ENCODE measurements at regions of chr11 and their contacts with region 1.

Region 1: DNA sequence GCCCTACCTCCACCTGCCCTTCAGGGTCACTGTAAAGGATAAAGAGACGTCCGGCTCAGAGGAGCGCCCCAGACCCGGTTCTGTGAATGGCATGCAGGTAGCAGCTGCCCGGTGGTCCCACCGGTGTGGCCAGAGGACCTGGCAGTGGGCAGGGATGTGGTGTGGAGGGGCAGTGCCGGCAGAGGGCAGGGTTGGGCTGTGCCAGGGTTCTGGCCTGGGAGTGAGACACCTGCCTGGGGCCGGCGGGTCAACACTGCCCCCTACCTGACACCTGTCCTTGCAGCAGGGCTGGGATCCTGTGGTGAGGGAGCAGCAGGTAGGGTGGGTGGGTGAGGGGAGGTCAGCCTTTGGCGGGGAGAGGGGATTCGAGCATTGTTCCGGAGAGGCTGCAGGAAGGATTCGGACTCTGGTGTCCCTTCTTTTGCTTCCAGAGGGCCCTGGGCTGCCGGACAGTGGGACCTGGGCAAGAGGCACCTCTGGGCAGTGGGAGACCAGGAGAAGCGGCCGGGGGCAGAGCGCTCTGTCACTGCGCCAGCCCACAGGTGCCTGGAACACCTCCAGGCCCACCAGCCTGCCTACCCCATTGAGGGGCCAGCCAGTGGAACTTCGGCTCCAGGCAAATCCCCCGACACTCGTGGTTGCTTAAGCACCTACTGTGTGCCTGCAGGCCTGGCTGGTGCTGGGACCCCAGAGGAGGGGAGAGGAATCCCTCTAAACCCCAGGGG is 1.6 kb upstream of the PHLDA2 start:
- DNase-seq: peak; percentile 83 to 97
- H3K4me3 ChIP-seq: peak overlapping the region in 3 of 4 experiments; percentile 26 to 56 (median 38); a peak in 6 of 8 replicates
- H3K27ac ChIP-seq: no peak overlapping the region
- H3K4me1 ChIP-seq: peaks cover 0 to 13% (median 5%) of the 10 kb centered on the region in 4 experiments; a peak in 6 of 7 replicates
- H3K27me3 ChIP-seq: peaks cover 25 to 39% (median 37%) of the 10 kb centered on the region in 4 experiments
- CTCF ChIP-seq: peak in 2 of 3 experiments; percentile 96 to 100; a peak in 3 of 4 replicates
- EP300 ChIP-seq: peak in 1 of 2 experiments; percentile 60; a peak in 1 of 3 replicates
- POLR2A ChIP-seq: no peak
- RAD21 ChIP-seq: peak; percentile 93

Region 2: DNA sequence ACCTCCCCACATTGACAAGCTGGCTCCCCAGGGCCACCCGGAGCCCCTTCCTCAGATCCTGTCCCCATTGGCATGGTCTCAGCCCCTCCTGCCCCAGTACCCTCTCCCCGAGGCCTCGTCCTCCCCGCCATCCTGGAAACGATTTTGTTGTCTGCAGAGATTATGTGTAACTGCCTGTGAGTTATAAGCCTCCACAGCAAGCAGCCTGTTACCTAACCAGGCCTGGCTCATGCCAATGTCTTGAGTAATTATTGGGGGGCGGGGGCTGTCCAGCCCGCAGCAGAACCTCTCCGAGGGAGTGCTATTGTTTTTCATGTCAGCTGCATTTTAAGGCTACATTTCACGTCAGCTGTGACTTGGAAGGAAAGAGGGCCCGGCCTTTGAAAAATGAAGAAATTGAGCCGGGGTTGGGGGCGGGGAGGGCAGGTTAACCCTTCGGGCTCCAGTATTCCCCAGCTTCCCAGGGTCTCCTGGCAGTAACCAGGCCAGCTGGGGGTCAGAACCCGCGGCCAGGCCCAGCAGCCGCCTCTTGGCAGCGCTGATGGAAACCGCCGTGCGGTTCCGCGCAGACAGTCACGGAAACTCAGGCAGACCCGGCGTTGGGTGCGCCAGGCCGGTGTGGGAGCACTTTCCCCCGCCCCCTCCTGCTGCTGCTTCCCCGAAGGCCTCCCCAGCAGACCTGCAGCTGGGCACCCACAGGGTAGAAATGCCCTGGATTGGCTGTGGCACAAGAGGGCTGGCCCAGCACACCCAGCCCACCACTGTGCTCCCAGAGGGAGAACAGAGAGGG is 104.8 kb before region 1 on chr11:
- CTCF ChIA-PET with region 1: no interaction called
- POLR2A ChIA-PET with region 1: no interaction called
- DNase-seq: peak in 1 of 2 experiments; percentile 31
- H3K4me3 ChIP-seq: no peak overlapping the region
- H3K27ac ChIP-seq: no peak overlapping the region
- H3K4me1 ChIP-seq: peaks cover 2 to 18% (median 8%) of the 10 kb centered on the region in 4 experiments
- H3K27me3 ChIP-seq: peaks cover 0 to 31% (median 18%) of the 10 kb centered on the region in 4 experiments; a peak in 6 of 7 replicates
- CTCF ChIP-seq: no peak
- EP300 ChIP-seq: no peak
- POLR2A ChIP-seq: no peak
- RAD21 ChIP-seq: no peak

Region 3: GRCh38 chr11:2892215-2893020 is 38.4 kb before region 1 on chr11:
- CTCF ChIA-PET with region 1: interaction called, 129 read pairs
- POLR2A ChIA-PET with region 1: interaction called, 17 read pairs
- DNase-seq: peak; percentile 59 to 91
- H3K4me3 ChIP-seq: peak overlapping the region; percentile 25 to 52 (median 40)
- H3K27ac ChIP-seq: peak overlapping the region; percentile 72; the same call in 1 of the 2 replicates
- H3K4me1 ChIP-seq: peaks cover 0 to 20% (median 15%) of the 10 kb centered on the region in 4 experiments; a peak in 6 of 7 replicates
- H3K27me3 ChIP-seq: peaks cover 0 to 23% (median 7%) of the 10 kb centered on the region in 4 experiments; a peak in 5 of 7 replicates
- CTCF ChIP-seq: peak in 2 of 3 experiments; percentile 92 to 93; a peak in 3 of 4 replicates
- EP300 ChIP-seq: 0 out of 3 replicates have a peak, but pooled peaks of 1 of the 2 experiments have one; percentile 6
- POLR2A ChIP-seq: no peak; a peak in 1 of 3 replicates
- RAD21 ChIP-seq: peak; percentile 90 to 94

Region 4: DNA sequence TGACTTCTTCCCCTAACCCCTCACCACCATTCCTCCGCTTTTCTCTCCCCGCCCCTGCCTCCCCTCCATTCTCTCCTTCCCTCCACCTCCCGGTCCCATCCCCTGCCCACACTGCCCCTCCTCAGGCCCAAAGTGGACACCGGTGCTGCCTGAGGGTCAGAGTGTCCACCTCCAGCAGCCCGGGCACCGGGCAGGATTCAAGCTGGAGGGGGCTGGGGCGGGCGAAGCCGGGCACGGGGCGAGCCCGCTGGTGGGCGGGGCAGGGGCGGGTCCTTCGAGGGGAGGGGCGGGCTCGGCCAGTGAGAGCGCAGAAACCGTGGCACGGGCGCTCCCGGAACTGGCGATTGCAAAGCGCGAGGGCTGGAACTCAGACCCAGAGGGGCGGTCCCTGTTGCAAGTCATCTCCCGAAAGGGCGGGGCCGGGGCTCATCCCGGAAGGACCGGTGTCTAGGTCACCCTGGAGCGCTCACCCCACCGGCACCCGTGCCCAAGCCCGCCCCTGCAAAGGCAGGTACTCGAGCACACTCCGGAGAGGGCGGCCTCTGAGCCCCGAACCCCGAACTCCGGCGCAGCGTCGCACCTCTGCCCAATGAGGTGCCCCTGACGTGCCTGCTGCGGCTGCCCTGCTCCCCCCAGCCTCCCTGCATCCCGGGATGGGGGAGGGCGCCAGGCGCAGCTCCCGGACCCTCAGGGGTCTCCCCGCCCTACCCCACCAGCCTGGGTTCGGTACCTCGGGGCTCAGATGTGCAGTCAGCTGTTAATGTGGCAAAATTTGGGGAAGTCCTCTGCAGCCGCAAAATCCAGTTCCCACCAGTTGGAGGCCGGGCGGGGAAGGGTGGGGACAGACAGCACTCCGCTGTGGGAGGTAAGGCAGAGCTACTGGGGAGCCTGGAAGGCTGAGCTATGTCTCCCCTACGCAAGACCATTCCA is 28.7 kb before region 1 on chr11:
- CTCF ChIA-PET with region 1: interaction called, 5 read pairs
- POLR2A ChIA-PET with region 1: interaction called, 20 read pairs
- DNase-seq: peak; percentile 73 to 92
- H3K4me3 ChIP-seq: peak overlapping the region; percentile 72 to 94 (median 76)
- H3K27ac ChIP-seq: peak overlapping the region; percentile 34; the same call in 1 of the 2 replicates
- H3K4me1 ChIP-seq: peaks cover 0 to 19% (median 14%) of the 10 kb centered on the region in 4 experiments; a peak in 5 of 7 replicates
- H3K27me3 ChIP-seq: peaks cover 0 to 25% (median 5%) of the 10 kb centered on the region in 4 experiments; a peak in 4 of 7 replicates
- CTCF ChIP-seq: no peak
- EP300 ChIP-seq: no peak
- POLR2A ChIP-seq: peak in 1 of 2 experiments; percentile 18; a peak in 1 of 3 replicates
- RAD21 ChIP-seq: no peak

Region 5: DNA sequence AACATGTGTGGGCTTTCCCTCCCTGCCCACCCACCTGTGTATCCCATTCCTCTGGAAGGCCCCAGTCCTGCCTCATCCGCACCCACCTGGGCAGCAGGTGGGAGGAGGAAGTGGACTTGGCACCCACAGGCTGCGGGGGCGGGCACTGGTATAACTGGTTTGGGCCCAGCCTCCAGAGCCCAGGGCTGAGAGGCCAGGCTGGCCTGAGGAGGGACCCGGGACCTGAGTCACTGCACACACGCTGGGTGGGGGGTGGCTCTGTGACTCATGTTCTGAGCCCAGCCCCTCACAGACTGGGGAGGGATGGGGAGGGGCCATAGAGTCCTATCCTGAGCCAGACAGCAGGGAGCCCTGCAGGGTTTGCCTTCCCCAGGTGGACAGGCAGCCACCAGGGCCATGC is 18.4 kb before region 1 on chr11:
- CTCF ChIA-PET with region 1: interaction called, 14 read pairs
- POLR2A ChIA-PET with region 1: interaction called, 5 read pairs
- DNase-seq: no peak
- H3K4me3 ChIP-seq: no peak overlapping the region
- H3K27ac ChIP-seq: no peak overlapping the region
- H3K4me1 ChIP-seq: peaks cover 0 to 19% (median 8%) of the 10 kb centered on the region in 4 experiments; a peak in 4 of 7 replicates
- H3K27me3 ChIP-seq: no peaks in the 10 kb centered on the region
- CTCF ChIP-seq: no peak
- EP300 ChIP-seq: no peak
- POLR2A ChIP-seq: no peak
- RAD21 ChIP-seq: no peak

Region 6: DNA sequence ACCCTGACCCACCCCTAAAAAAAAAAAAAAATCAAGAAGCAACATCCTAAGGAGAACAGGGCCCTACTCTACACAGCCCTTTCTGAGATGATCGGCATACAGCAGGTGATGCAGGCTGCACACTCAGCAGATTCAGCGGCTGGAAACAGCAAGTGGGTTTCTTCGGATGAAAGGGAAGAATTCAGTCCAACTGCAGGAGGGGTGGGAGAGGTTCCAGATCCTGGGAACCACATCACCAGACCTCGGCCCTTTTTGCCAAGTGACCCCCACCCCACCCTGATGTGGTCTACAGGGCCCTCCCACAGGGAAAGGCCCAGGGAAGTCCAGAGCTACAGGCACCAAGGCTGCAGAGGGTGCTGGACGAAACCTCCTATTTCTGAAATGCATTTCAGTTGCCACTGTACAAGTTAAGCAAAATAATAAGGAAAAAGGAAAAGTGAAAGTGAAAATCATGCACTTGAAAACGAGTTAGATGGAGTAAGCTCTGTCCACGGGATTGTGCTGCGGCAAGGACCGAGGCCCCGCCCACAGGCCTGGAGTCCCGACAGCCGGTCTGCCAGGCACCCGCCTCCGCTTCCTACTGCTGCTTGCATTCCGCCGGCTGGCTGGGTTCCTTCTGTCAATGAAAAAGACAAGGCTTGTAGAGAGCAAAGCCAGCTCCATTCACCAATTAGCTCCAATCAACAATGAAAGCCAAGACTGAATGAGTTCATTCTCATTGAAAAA is 14.3 kb after region 1 on chr11:
- CTCF ChIA-PET with region 1: interaction called, 33 read pairs
- POLR2A ChIA-PET with region 1: interaction called, 13 read pairs
- DNase-seq: peak; percentile 39 to 80
- H3K4me3 ChIP-seq: peak overlapping the region in 1 of 4 experiments; percentile 19; a peak in 1 of 8 replicates
- H3K27ac ChIP-seq: no peak overlapping the region
- H3K4me1 ChIP-seq: peaks cover 0 to 30% (median 12%) of the 10 kb centered on the region in 4 experiments; a peak in 6 of 7 replicates
- H3K27me3 ChIP-seq: no peaks in the 10 kb centered on the region
- CTCF ChIP-seq: no peak
- EP300 ChIP-seq: no peak
- POLR2A ChIP-seq: no peak
- RAD21 ChIP-seq: no peak

Region 7: DNA sequence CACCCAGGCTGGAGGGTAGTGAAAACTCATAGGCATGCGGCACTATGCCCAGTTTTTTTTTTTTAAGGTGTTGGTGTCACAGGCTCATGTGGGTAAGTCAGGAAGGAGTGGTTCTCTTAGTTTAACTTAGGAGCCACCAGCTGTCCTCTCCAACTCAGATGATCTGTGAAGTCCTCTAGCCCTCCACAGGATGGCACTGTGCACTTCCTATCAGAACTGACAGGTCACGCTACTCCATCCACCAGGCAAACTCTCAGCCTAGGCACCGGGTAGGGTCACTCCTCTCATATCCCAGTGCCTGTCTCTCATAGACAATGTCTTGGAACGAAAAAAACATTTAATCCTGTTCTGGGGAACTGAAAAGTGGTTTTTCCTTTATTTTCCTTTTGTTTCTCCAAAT is 44.7 kb after region 1 on chr11:
- CTCF ChIA-PET with region 1: interaction called, 10 read pairs
- POLR2A ChIA-PET with region 1: no interaction called
- DNase-seq: no peak
- H3K4me3 ChIP-seq: no peak overlapping the region
- H3K27ac ChIP-seq: no peak overlapping the region
- H3K4me1 ChIP-seq: no peaks in the 10 kb centered on the region
- H3K27me3 ChIP-seq: no peaks in the 10 kb centered on the region
- CTCF ChIP-seq: peak; percentile 46 to 60 (median 51)
- EP300 ChIP-seq: no peak
- POLR2A ChIP-seq: no peak
- RAD21 ChIP-seq: peak; percentile 50 to 58

Measured in H1 (cell line).